Activated T-helper 2 cell treated with anti-CD3 and anti-CD28 coated beads, Interferon-gamma antibody, Interleukin-2, Interleukin-4, amounts not matched to agents 10 μg/mL and 5 μg/mL and 100 μg/mL, durations not matched to agents 14 hours and 24 hours and 36 hours (primary cell): ENCODE measurements at regions of chr1 and their contacts with region 1.

Region 1: GRCh38 chr1:93814059-93814794 is 64.8 kb downstream of the DNTTIP2 start:
- DNase-seq: peak; percentile 53
- H3K4me3 Mint-ChIP-seq: no peak overlapping the region
- H3K27ac Mint-ChIP-seq: no peak overlapping the region
- H3K4me1 Mint-ChIP-seq: peaks cover 38% of the 10 kb centered on the region
- H3K27me3 Mint-ChIP-seq: no peaks in the 10 kb centered on the region

Region 2: GRCh38 chr1:93437976-93438605 is 376.1 kb before region 1 on chr1:
- intact Hi-C with region 1: loop called (anchors 1 kb)
- DNase-seq: no peak
- H3K4me3 Mint-ChIP-seq: no peak overlapping the region
- H3K27ac Mint-ChIP-seq: no peak overlapping the region
- H3K4me1 Mint-ChIP-seq: peaks cover 2% of the 10 kb centered on the region
- H3K27me3 Mint-ChIP-seq: peaks cover 23% of the 10 kb centered on the region

Region 3: DNA sequence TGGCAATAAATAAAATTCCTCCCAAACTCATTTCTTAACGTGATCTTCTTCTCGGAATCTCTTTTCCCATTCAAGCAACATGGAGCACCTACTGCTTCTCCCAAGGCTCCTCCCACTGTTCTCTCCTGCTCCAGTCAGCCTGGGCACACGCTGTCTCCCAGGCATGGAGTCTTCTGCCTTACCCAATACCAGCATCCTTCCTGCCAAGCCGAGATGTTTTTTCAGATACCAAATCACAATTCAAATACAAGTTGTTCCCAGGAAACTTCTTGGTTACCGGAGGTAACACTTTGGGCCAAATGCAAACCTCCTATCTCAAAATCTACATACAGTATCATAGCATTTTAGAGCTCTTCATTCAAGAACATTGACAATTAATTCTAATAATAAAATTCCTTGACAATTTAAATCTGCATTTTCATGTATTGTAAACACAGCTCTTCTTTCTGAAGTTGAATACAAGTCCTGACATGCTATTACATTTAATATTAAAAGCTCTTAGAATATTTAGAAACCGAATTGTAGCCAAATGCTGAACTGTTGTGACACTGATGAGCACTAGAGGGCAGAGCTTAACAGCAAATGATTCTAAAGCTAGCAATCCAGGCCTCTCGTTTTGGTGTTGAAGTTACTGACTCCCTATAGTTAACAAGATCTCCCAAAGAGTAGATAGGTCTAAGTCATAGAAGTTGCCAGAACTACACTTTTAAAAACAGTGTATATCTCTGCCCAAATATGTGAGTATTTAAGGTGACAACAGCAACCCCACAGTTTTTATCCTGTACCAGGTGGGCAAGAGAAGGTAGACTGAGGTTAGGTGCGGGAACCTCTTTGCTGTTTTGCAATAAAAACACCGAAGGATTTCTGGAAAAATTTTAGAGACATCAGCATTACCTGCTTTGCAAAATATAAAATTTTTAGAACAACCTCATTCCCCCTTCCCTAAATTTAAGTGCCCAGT is 184.8 kb before region 1 on chr1:
- intact Hi-C with region 1: loop called (anchors 1 kb)
- DNase-seq: peak; percentile 29
- H3K4me3 Mint-ChIP-seq: no peak overlapping the region
- H3K27ac Mint-ChIP-seq: no peak overlapping the region
- H3K4me1 Mint-ChIP-seq: peaks cover 12% of the 10 kb centered on the region
- H3K27me3 Mint-ChIP-seq: no peaks in the 10 kb centered on the region

Region 4: GRCh38 chr1:93680757-93681550 is 133.3 kb before region 1 on chr1:
- intact Hi-C with region 1: loop called (anchors 1 kb)
- DNase-seq: peak; percentile 46
- H3K4me3 Mint-ChIP-seq: peak overlapping the region; percentile 94
- H3K27ac Mint-ChIP-seq: peak overlapping the region; percentile 84
- H3K4me1 Mint-ChIP-seq: peaks cover 38% of the 10 kb centered on the region
- H3K27me3 Mint-ChIP-seq: peaks cover 31% of the 10 kb centered on the region

Region 5: GRCh38 chr1:93749894-93750301 is 64.3 kb before region 1 on chr1:
- intact Hi-C with region 1: loop called (anchors 10 kb)
- DNase-seq: no peak
- H3K4me3 Mint-ChIP-seq: no peak overlapping the region
- H3K27ac Mint-ChIP-seq: peak overlapping the region; percentile 25
- H3K4me1 Mint-ChIP-seq: peaks cover 53% of the 10 kb centered on the region
- H3K27me3 Mint-ChIP-seq: no peaks in the 10 kb centered on the region

Region 6: DNA sequence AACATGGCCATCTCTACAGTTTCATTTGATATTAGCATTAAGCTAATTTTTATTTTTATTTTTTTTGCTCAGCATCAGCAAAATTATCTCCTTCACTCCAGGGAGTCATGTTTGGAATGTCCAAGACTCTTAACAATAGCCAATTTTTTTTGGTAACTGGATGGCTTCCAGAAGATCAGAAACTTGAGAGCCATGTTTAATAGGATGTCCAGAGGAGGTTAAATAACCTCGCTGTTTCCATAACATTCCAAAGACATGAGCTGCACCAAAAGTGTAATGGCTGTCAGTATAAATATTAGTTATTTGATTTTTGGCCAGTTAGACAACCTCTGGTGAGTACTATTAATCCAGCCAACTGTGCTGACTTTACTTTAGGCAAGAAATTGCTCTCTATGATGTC is 15.9 kb before region 1 on chr1:
- intact Hi-C with region 1: no loop called
- DNase-seq: no peak
- H3K4me3 Mint-ChIP-seq: no peak overlapping the region
- H3K27ac Mint-ChIP-seq: no peak overlapping the region
- H3K4me1 Mint-ChIP-seq: no peaks in the 10 kb centered on the region
- H3K27me3 Mint-ChIP-seq: peaks cover 22% of the 10 kb centered on the region